Activated T-helper 2 cell treated with anti-CD3 and anti-CD28 coated beads, Interferon-gamma antibody, Interleukin-2, Interleukin-4, amounts not matched to agents 10 μg/mL and 5 μg/mL and 100 μg/mL, durations not matched to agents 14 hours and 24 hours and 36 hours (primary cell): ENCODE measurements at regions of chr17 and their contacts with region 1.

Region 1: DNA sequence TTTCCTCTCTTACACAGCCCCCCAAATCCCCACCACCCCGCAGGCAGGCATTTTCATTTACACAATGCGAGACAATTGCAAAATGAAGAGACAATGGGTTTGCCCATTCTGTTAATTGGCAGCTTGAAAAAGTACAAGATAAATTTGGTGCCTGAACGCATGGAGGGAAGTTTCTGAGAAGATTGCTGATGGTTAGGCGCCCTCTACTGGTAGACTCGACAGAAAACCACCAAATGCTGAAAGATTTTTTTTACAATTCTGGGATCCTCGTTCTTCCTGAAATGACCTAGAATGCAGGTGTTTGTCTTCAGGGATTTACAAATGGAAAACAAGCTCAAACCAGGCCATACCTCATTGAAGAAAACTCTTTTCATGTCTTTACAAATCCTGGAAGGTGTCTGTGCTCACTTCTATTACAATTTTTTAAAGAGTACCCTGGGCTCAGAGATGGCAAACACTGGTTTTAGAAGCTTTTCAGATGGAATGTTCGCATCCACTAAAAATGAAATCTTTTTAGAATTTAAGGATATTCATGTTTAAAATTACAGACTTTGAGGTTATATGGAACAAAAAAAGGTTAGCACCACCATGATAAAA is 338.5 kb downstream of the PMP22 start:
- DNase-seq: peak; percentile 11
- H3K4me3 Mint-ChIP-seq: no peak overlapping the region
- H3K27ac Mint-ChIP-seq: no peak overlapping the region
- H3K4me1 Mint-ChIP-seq: no peaks in the 10 kb centered on the region
- H3K27me3 Mint-ChIP-seq: no peaks in the 10 kb centered on the region

Region 2: DNA sequence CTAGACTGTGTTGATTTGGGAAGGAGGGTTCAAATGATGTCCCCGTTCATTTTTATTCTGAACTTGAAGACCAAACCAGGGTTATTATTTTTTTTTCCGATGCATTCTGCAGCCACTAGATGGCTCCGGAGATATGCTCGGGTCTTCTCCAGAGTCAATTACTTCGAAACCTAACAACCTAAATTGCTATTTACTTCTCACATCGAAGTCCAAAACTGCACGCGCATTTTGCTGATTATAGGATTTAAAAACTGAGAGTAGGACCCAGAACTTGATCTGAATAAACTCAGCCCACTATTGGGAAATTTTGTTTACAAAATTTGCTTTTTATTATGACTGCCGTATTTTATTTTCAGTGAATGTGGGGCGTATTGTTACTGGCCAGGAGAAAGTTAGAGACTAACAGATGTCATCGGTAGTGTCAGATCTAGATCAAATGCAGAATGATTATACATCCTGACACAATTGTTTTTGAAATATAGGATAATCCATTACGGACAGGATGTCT is 1588.7 kb before region 1 on chr17:
- intact Hi-C with region 1: loop called (anchors 10 kb)
- DNase-seq: no peak
- H3K4me3 Mint-ChIP-seq: peak overlapping the region; percentile 7
- H3K27ac Mint-ChIP-seq: no peak overlapping the region
- H3K4me1 Mint-ChIP-seq: peaks cover 4% of the 10 kb centered on the region
- H3K27me3 Mint-ChIP-seq: peaks cover 12% of the 10 kb centered on the region

Region 3: DNA sequence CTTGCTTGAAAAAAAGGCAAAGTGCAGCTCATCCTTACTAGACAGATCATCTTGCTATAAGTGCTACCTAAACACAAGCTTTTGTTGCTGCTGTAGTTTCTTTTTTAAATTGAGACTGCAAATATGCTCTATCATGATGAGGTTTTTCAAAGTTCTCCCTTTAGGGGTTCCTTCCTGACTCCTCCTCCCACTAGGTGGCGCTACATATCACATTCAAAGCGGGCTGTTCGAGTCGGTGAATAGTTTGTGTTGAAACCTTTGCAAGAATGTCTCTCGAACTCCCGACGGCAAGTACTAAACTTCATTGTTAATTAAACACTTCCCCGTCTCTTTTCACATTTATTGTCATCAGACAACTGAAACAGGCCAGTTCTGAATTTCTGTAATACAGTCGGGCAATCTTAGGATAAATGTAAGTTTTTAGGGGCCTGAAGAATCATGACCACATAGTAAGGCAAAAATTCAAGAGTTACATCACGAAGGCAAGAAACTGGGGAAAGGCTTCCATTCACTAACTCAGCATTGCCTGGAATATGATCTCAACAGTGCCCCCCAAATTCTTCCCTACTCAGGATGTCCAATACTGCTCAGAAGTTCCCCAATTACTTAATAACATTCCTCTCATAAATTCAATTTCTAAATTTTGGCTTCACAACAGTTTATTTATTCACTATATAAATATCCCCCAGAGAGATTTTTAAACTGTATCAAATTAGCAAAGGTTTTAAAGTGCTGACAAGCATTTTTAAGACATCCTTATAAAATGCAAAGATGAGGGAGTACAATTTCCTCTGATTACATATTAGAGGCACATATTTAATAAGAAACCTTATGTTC is 1331.6 kb before region 1 on chr17:
- intact Hi-C with region 1: loop called (anchors 1 kb)
- DNase-seq: peak; percentile 66
- H3K4me3 Mint-ChIP-seq: no peak overlapping the region
- H3K27ac Mint-ChIP-seq: no peak overlapping the region
- H3K4me1 Mint-ChIP-seq: peaks cover 8% of the 10 kb centered on the region
- H3K27me3 Mint-ChIP-seq: peaks cover 52% of the 10 kb centered on the region

Region 4: DNA sequence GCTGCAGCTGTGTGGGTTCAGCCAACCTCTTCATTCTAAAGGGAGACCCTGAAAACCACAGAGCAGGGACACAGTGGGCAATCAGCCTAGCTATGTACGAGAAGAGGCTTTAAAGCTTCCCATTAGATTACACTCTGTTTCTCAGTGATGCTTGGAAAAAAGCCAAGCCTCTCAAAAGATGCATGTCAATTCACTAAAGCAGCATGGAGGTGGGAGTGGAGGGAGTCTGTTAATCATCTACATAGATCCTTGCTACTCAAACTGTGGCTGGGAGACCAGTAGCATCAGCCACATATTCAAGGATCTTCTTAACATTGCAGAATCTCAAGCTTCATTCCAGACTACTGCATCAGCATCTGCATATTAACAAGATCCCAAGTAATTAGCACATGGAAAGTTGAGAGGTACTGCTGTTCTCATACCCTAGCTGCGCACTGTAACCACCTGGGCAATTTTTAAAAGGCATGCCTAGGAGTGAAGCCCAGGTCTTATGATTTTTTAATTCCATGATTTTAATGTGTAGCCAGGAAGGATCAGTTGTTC is 32.6 kb after region 1 on chr17:
- intact Hi-C with region 1: no loop called
- DNase-seq: no peak
- H3K4me3 Mint-ChIP-seq: no peak overlapping the region
- H3K27ac Mint-ChIP-seq: no peak overlapping the region
- H3K4me1 Mint-ChIP-seq: no peaks in the 10 kb centered on the region
- H3K27me3 Mint-ChIP-seq: no peaks in the 10 kb centered on the region